ENCODE measurements at regions of chr1 and their contacts with region 1.

Region 1: GRCh38 chr1:223341121-223341520 is 22.9 kb downstream of the SUSD4 start:
- DNase-seq: peak; percentile 67 to 87 (median 71)
- ATAC-seq: peak; percentile 81 to 92 (median 87)
- H3K4me3 ChIP-seq: no peak overlapping the region
- H3K27ac ChIP-seq: peak overlapping the region in 9 of 12 donors; percentile 17 to 85 (median 43)
- H3K4me1 ChIP-seq: peaks cover 0 to 69% (median 17%) of the 10 kb centered on the region in 12 donors
- H3K27me3 ChIP-seq: no peaks in the 10 kb centered on the region
- CTCF ChIP-seq: no peak
- POLR2A ChIP-seq: no peak

Region 2: GRCh38 chr1:222712253-222713090 is 628.6 kb before region 1 on chr1 and contains the starts of genes AIDA and BROX:
- intact Hi-C with region 1: no loop called
- DNase-seq: peak; percentile 95 to 98 (median 96)
- ATAC-seq: peak; percentile 90 to 96 (median 95)
- H3K4me3 ChIP-seq: peak within 1 kb of the TSS; percentile 50 to 96 (median 77)
- H3K27ac ChIP-seq: peak within 1 kb of the TSS; percentile 93 to 100 (median 98)
- H3K4me1 ChIP-seq: peaks cover 0 to 41% (median 30%) of the 10 kb centered on the region in 12 donors
- H3K27me3 ChIP-seq: no peaks in the 10 kb centered on the region
- CTCF ChIP-seq: no peak
- POLR2A ChIP-seq: peak in 1 of 2 donors; percentile 64
- total RNA-seq, gene AIDA: 29.9 to 73.7 (median 49.2) TPM
- total RNA-seq, gene BROX: 29.6 to 51.1 (median 36.7) TPM

Region 3: GRCh38 chr1:223142795-223143536 is 198.2 kb before region 1 on chr1 and contains the start of gene TLR5:
- intact Hi-C with region 1: loop called in 1 of 10 experiments (anchors 10 kb)
- DNase-seq: peak; percentile 87 to 95 (median 91)
- ATAC-seq: peak; percentile 83 to 97 (median 94)
- H3K4me3 ChIP-seq: peak within 1 kb of the TSS; percentile 41 to 81 (median 68)
- H3K27ac ChIP-seq: peak within 1 kb of the TSS in 10 of 12 donors; percentile 33 to 88 (median 66)
- H3K4me1 ChIP-seq: peaks cover 0 to 47% (median 14%) of the 10 kb centered on the region in 12 donors
- H3K27me3 ChIP-seq: no peaks in the 10 kb centered on the region
- CTCF ChIP-seq: peak; percentile 48 to 84 (median 64)
- POLR2A ChIP-seq: peak in 1 of 2 donors; percentile 46
- total RNA-seq, gene TLR5: 0.25 to 9.0 (median 2.0) TPM

Region 4: GRCh38 chr1:223423641-223424233 is 82.6 kb after region 1 on chr1:
- intact Hi-C with region 1: loop called in 1 of 10 experiments (anchors 5 kb)
- DNase-seq: no peak
- ATAC-seq: peak in 3 of 4 donors; percentile 35 to 61 (median 44)
- H3K4me3 ChIP-seq: no peak overlapping the region
- H3K27ac ChIP-seq: no peak overlapping the region
- H3K4me1 ChIP-seq: peaks cover 0 to 26% (median 4%) of the 10 kb centered on the region in 12 donors
- H3K27me3 ChIP-seq: peaks cover 0 to 2% (median 0%) of the 10 kb centered on the region in 9 donors
- CTCF ChIP-seq: no peak
- POLR2A ChIP-seq: no peak